ENCODE measurements at regions of chr16 and their contacts with region 1.

Region 1: GRCh38 chr16:7211781-7212180 is 120.9 kb upstream of the RBFOX1 start:
- DNase-seq: no peak
- ATAC-seq: no peak
- H3K4me3 ChIP-seq: no peak overlapping the region
- H3K4me3 Mint-ChIP-seq: no peak overlapping the region
- H3K27ac ChIP-seq: no peak overlapping the region
- H3K27ac Mint-ChIP-seq: no peak overlapping the region
- H3K4me1 ChIP-seq: no peaks in the 10 kb centered on the region
- H3K4me1 Mint-ChIP-seq: no peaks in the 10 kb centered on the region
- H3K27me3 ChIP-seq: no peaks in the 10 kb centered on the region
- H3K27me3 Mint-ChIP-seq: no peaks in the 10 kb centered on the region
- CTCF ChIP-seq: no peak

Region 2: GRCh38 chr16:7177875-7178505 is 33.8 kb before region 1 on chr16:
- intact Hi-C with region 1: loop called (anchors 1 kb)
- DNase-seq: no peak
- ATAC-seq: no peak
- H3K4me3 ChIP-seq: no peak overlapping the region
- H3K4me3 Mint-ChIP-seq: no peak overlapping the region
- H3K27ac ChIP-seq: no peak overlapping the region
- H3K27ac Mint-ChIP-seq: no peak overlapping the region
- H3K4me1 ChIP-seq: no peaks in the 10 kb centered on the region
- H3K4me1 Mint-ChIP-seq: no peaks in the 10 kb centered on the region
- H3K27me3 ChIP-seq: no peaks in the 10 kb centered on the region
- H3K27me3 Mint-ChIP-seq: no peaks in the 10 kb centered on the region
- CTCF ChIP-seq: no peak

Measured in natural killer cell (primary cell).